Heart right ventricle (tissue), 16 donors: ENCODE measurements at regions of chr2 and their contacts with region 1.

Region 1: GRCh38 chr2:72887754-72888437 is 688 bp downstream of the SPR start:
- DNase-seq: peak; percentile 91 to 92
- ATAC-seq: peak; percentile 62 to 88 (median 76)
- H3K4me3 ChIP-seq: peak overlapping the region; percentile 59 to 79 (median 67)
- H3K27ac ChIP-seq: peak overlapping the region; percentile 78 to 97 (median 92)
- H3K4me1 ChIP-seq: peaks cover 10 to 42% (median 27%) of the 10 kb centered on the region in 9 donors
- H3K27me3 ChIP-seq: peaks cover 0 to 30% (median 0%) of the 10 kb centered on the region in 7 donors
- CTCF ChIP-seq: peak; percentile 84 to 97 (median 93)

Region 2: GRCh38 chr2:72973566-72974435 is 85.9 kb after region 1 on chr2:
- intact Hi-C with region 1: loop called in 9 of 10 experiments (anchors 2 to 10 kb)
- DNase-seq: peak in 1 of 2 donors; percentile 30
- ATAC-seq: peak; percentile 65 to 89 (median 78)
- H3K4me3 ChIP-seq: no peak overlapping the region
- H3K27ac ChIP-seq: no peak overlapping the region
- H3K4me1 ChIP-seq: peaks cover 0 to 7% (median 0%) of the 10 kb centered on the region in 9 donors
- H3K27me3 ChIP-seq: no peaks in the 10 kb centered on the region
- CTCF ChIP-seq: peak; percentile 38 to 84 (median 73)

Region 3: DNA sequence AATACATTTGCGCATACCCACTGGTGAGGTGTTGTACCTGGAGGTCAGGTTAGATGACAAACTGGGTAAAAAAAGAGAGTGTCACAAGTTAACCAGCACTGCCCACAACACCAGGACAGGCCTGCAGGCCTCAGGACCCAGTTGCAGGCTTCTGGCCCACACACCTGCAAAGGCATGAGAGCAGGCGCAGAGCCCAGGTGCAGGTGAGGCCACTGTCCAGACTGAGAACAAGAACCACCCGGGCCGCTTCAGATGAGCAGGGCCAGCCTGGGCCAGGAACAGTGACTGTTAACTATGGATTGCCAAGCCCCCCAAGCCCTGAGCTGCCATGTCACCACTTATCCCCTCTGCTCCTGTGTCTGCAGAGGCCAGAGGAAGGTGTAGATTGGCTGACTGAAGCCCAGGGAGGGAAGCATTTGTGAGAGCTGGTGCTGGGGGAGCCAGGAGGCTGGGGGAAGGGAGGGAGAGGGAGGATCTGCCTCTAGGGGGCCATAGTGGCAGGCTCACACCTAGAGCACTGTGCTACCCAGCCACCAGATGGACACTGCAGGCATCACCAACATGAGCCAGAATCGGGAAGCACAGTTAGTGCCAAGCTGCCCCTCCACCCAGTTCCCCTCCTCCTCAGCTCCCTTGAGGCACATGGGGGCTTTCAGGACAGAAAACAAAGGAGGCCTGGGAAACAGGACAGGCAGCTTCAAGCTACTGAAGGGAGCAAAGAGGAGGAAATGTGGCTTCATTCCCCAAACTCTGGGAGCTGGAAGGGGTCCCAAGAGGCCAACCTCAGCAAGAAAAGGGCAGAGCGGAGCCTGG is 148.2 kb after region 1 on chr2:
- intact Hi-C with region 1: no loop called
- DNase-seq: no peak
- ATAC-seq: peak in 1 of 8 donors; percentile 24
- H3K4me3 ChIP-seq: no peak overlapping the region
- H3K27ac ChIP-seq: no peak overlapping the region
- H3K4me1 ChIP-seq: peaks cover 0 to 29% (median 0%) of the 10 kb centered on the region in 9 donors
- H3K27me3 ChIP-seq: no peaks in the 10 kb centered on the region
- CTCF ChIP-seq: no peak

Region 4: GRCh38 chr2:73071360-73072133 is 183.7 kb after region 1 on chr2 and contains the start of gene SFXN5:
- intact Hi-C with region 1: loop called in 6 of 10 experiments (anchors 5 to 10 kb)
- DNase-seq: peak; percentile 99
- ATAC-seq: peak; percentile 95 to 98 (median 97)
- H3K4me3 ChIP-seq: peak within 1 kb of the TSS; percentile 69 to 98 (median 94)
- H3K27ac ChIP-seq: peak within 1 kb of the TSS; percentile 79 to 99 (median 93)
- H3K4me1 ChIP-seq: peaks cover 10 to 44% (median 25%) of the 10 kb centered on the region in 9 donors
- H3K27me3 ChIP-seq: no peaks in the 10 kb centered on the region
- CTCF ChIP-seq: peak in 7 of 9 donors; percentile 12 to 58 (median 35)
- total RNA-seq, gene SFXN5: 7.3 to 11.8 (median 10.0) TPM

Region 5: DNA sequence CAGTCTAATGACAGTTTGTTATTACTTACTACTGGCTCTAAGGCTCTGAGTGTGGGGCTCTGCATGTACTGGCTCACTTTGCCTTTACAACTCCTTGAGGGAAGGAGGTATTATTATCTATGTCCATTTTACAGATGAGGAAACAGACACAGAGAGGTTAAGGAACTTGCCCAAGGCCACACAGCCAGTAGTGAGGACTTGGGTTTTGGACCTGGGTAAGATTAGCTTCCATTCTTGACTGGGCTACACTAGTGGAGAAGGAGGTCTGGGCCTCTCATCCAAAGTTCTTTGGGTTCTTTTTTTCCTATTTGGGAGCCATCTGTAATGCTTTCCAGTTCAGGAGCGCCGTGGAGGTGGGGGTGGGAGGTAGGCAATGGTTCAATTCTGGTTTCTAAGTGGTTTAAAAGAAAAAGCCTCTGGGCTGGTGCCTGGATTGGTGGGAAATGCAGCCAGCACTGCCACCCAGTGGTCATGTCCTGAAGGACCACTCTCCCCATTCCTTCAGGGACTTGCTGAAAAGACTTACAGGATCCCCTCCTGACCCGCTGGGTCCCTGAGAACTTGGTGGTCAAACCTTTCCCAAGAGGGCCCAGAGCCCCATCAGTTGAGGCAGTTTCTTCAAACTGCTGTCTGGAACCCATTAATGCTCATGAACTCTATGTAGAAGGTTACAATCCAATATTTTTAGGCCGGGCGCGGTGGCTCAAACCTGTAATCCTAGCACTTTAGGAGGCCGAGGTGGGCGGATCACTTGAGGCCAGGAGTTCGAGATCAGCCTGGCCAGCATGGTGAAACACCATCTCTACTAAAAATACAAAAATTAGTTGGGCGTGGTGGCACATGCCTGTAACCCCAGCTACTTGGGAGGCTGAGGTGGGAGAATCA is 275.8 kb after region 1 on chr2:
- intact Hi-C with region 1: loop called in 9 of 10 experiments (anchors 1 to 5 kb)
- DNase-seq: peak; percentile 60 to 66
- ATAC-seq: peak; percentile 58 to 90 (median 83)
- H3K4me3 ChIP-seq: no peak overlapping the region
- H3K27ac ChIP-seq: no peak overlapping the region
- H3K4me1 ChIP-seq: no peaks in the 10 kb centered on the region
- H3K27me3 ChIP-seq: peaks cover 0 to 4% (median 0%) of the 10 kb centered on the region in 7 donors
- CTCF ChIP-seq: peak; percentile 75 to 93 (median 87)